H1 (cell line): ENCODE measurements at regions of chr6 and their contacts with region 1.

Region 1: GRCh38 chr6:38493931-38494547 is 145.7 kb downstream of the BTBD9 start:
- DNase-seq: peak; percentile 57 to 95
- H3K4me3 ChIP-seq: no peak overlapping the region
- H3K27ac ChIP-seq: no peak overlapping the region
- H3K4me1 ChIP-seq: peaks cover 0 to 4% (median 0%) of the 10 kb centered on the region in 4 experiments; a peak in 1 of 7 replicates
- H3K27me3 ChIP-seq: no peaks in the 10 kb centered on the region
- CTCF ChIP-seq: peak in 2 of 3 experiments; percentile 72 to 75; a peak in 3 of 4 replicates
- EP300 ChIP-seq: no peak
- POLR2A ChIP-seq: no peak
- RAD21 ChIP-seq: peak; percentile 97 to 98

Region 2: DNA sequence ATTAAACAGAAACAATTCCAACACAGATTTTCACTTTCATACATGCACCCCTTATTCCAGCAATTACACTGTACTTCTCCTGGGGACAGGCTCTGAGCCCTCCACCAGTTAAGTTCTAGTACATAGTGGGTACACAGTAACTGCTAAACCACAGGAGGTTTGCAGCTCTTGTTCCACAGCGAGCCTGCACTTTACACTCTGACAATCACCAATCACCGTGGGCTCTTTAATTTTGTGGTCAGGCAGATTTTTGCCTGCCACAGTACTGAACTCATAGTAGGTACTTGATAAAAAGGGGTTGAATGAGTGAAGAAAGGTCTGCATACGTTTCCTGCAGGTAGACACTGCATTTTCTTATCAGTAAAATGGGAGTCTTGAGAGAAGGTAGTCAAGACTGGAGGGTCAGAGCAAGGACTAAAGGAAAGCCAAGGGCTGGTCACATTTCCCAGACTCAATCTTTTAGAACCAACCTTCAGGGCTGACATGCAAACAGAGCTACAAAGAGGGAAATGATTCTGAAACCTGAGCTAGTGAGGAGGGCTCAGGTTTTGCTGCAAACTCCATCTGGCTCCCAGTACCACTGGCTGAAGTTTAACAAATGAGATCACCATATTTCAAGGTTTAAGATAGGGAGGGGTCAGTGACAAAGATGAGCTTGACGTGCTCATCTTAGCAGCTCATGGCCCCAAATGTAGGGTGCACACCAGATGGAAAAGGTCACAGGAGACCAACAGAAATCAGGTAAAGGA is 258.9 kb before region 1 on chr6:
- CTCF ChIA-PET with region 1: interaction called, 12 read pairs
- POLR2A ChIA-PET with region 1: no interaction called
- DNase-seq: no peak
- H3K4me3 ChIP-seq: no peak overlapping the region
- H3K27ac ChIP-seq: no peak overlapping the region
- H3K4me1 ChIP-seq: peaks cover 0 to 15% (median 9%) of the 10 kb centered on the region in 4 experiments; a peak in 5 of 7 replicates
- H3K27me3 ChIP-seq: no peaks in the 10 kb centered on the region
- CTCF ChIP-seq: no peak
- EP300 ChIP-seq: no peak
- POLR2A ChIP-seq: no peak
- RAD21 ChIP-seq: no peak

Region 3: GRCh38 chr6:38445925-38446324 is 48.1 kb before region 1 on chr6:
- CTCF ChIA-PET with region 1: interaction called, 11 read pairs
- POLR2A ChIA-PET with region 1: no interaction called
- DNase-seq: no peak
- H3K4me3 ChIP-seq: no peak overlapping the region
- H3K27ac ChIP-seq: no peak overlapping the region
- H3K4me1 ChIP-seq: no peaks in the 10 kb centered on the region
- H3K27me3 ChIP-seq: peaks cover 0 to 1% (median 0%) of the 10 kb centered on the region in 4 experiments; a peak in 1 of 7 replicates
- CTCF ChIP-seq: no peak
- EP300 ChIP-seq: no peak
- POLR2A ChIP-seq: no peak
- RAD21 ChIP-seq: no peak

Region 4: GRCh38 chr6:38510205-38510604 is 16.2 kb after region 1 on chr6:
- CTCF ChIA-PET with region 1: interaction called, 22 read pairs
- POLR2A ChIA-PET with region 1: no interaction called
- DNase-seq: no peak
- H3K4me3 ChIP-seq: no peak overlapping the region
- H3K27ac ChIP-seq: no peak overlapping the region
- H3K4me1 ChIP-seq: peaks cover 0 to 10% (median 7%) of the 10 kb centered on the region in 4 experiments; a peak in 3 of 7 replicates
- H3K27me3 ChIP-seq: no peaks in the 10 kb centered on the region
- CTCF ChIP-seq: no peak
- EP300 ChIP-seq: no peak
- POLR2A ChIP-seq: no peak
- RAD21 ChIP-seq: no peak

Region 5: GRCh38 chr6:38570750-38571149 is 76.7 kb after region 1 on chr6:
- CTCF ChIA-PET with region 1: interaction called, 17 read pairs
- POLR2A ChIA-PET with region 1: no interaction called
- DNase-seq: no peak
- H3K4me3 ChIP-seq: no peak overlapping the region
- H3K27ac ChIP-seq: no peak overlapping the region
- H3K4me1 ChIP-seq: peaks cover 0 to 4% (median 0%) of the 10 kb centered on the region in 4 experiments; a peak in 1 of 7 replicates
- H3K27me3 ChIP-seq: no peaks in the 10 kb centered on the region
- CTCF ChIP-seq: peak in 2 of 3 experiments; percentile 16 to 32; a peak in 2 of 4 replicates
- EP300 ChIP-seq: no peak
- POLR2A ChIP-seq: no peak
- RAD21 ChIP-seq: peak; percentile 49 to 58

Region 6: GRCh38 chr6:38588631-38589366 is 94.8 kb after region 1 on chr6:
- CTCF ChIA-PET with region 1: no interaction called
- POLR2A ChIA-PET with region 1: no interaction called
- DNase-seq: no peak
- H3K4me3 ChIP-seq: no peak overlapping the region
- H3K27ac ChIP-seq: no peak overlapping the region
- H3K4me1 ChIP-seq: no peaks in the 10 kb centered on the region
- H3K27me3 ChIP-seq: no peaks in the 10 kb centered on the region
- CTCF ChIP-seq: no peak
- EP300 ChIP-seq: no peak
- POLR2A ChIP-seq: no peak
- RAD21 ChIP-seq: no peak